ENCODE measurements at regions of chr5 and their contacts with region 1.

Region 1: DNA sequence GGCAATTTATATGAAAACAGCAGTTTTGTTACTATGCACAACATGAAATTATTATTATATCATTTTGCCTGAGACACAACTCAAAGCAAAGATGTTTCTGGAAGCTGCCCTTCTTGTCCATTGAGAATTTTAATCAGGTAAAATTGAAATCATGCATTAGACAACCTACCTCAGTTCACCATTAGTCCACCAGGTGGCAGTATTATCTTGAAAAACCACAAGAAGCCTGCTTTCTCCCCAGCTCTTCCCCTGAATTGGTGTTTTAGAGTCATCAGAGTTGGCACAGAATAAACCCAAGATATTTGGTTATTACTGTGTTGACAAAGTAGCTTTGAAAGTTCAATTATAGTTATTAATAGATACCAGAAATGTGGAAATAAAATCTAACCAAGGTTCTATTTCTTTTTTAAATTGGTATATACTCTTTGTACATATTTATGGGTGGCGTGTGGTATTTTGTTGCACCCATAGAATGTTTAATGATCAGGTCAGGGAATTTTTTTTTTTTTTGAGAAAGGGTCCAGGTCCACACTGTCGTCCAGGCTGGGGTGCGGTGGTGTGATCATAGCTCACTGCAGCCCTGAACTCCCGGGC is 25.7 kb downstream of the UTP15 start:
- DNase-seq: peak; percentile 78
- H3K4me3 ChIP-seq: no peak overlapping the region
- H3K27ac ChIP-seq: no peak overlapping the region
- H3K27me3 ChIP-seq: no peaks in the 10 kb centered on the region
- CTCF ChIP-seq: peak; percentile 72

Region 2: GRCh38 chr5:73709536-73710129 is 118.4 kb after region 1 on chr5:
- CTCF ChIA-PET with region 1: interaction called, 11 read pairs
- POLR2A ChIA-PET with region 1: no interaction called
- DNase-seq: no peak
- H3K4me3 ChIP-seq: no peak overlapping the region
- H3K27ac ChIP-seq: no peak overlapping the region
- H3K27me3 ChIP-seq: no peaks in the 10 kb centered on the region
- CTCF ChIP-seq: no peak

Region 3: DNA sequence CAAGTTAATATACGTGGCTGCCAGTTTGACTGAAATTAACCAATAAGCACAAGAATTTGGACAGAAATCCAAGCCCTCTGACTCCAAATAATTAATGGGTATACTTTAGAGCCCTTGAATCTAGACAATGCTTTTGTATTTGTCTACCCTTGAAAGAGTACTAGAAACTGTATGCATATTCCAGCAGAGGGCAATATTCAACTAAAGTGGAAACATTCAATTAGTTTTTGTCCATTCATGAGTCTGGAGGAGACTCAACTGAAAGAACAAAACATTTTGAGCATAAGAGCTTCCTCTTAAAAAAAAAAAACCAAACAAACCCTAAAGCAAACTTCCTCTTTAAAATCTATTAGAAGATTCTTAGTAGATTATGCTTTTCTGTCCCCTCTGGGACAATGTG is 192.6 kb after region 1 on chr5:
- CTCF ChIA-PET with region 1: interaction called, 352 read pairs
- POLR2A ChIA-PET with region 1: no interaction called
- DNase-seq: no peak
- H3K4me3 ChIP-seq: no peak overlapping the region
- H3K27ac ChIP-seq: no peak overlapping the region
- H3K27me3 ChIP-seq: no peaks in the 10 kb centered on the region
- CTCF ChIP-seq: peak; percentile 46

Region 4: GRCh38 chr5:73887683-73888082 is 296.5 kb after region 1 on chr5:
- CTCF ChIA-PET with region 1: interaction called, 10 read pairs
- POLR2A ChIA-PET with region 1: interaction called, 3 read pairs
- DNase-seq: no peak
- H3K4me3 ChIP-seq: no peak overlapping the region
- H3K27ac ChIP-seq: no peak overlapping the region
- H3K27me3 ChIP-seq: no peaks in the 10 kb centered on the region
- CTCF ChIP-seq: no peak